ENCODE measurements at regions of chr6 and their contacts with region 1.

Region 1: GRCh38 chr6:142857233-142857761 is 87.7 kb downstream of the HIVEP2 start:
- DNase-seq: no peak
- ATAC-seq: peak; percentile 13
- H3K4me3 Mint-ChIP-seq: peak overlapping the region; percentile 82
- H3K27ac Mint-ChIP-seq: peak overlapping the region; percentile 95
- H3K4me1 Mint-ChIP-seq: peaks cover 67% of the 10 kb centered on the region
- H3K27me3 Mint-ChIP-seq: no peaks in the 10 kb centered on the region

Region 2: GRCh38 chr6:142819603-142820337 is 37.5 kb before region 1 on chr6:
- POLR2A ChIA-PET with region 1: interaction called, 12 read pairs
- DNase-seq: no peak
- ATAC-seq: peak; percentile 73
- H3K4me3 Mint-ChIP-seq: peak overlapping the region; percentile 93
- H3K27ac Mint-ChIP-seq: peak overlapping the region; percentile 96
- H3K4me1 Mint-ChIP-seq: peaks cover 51% of the 10 kb centered on the region
- H3K27me3 Mint-ChIP-seq: no peaks in the 10 kb centered on the region

Region 3: DNA sequence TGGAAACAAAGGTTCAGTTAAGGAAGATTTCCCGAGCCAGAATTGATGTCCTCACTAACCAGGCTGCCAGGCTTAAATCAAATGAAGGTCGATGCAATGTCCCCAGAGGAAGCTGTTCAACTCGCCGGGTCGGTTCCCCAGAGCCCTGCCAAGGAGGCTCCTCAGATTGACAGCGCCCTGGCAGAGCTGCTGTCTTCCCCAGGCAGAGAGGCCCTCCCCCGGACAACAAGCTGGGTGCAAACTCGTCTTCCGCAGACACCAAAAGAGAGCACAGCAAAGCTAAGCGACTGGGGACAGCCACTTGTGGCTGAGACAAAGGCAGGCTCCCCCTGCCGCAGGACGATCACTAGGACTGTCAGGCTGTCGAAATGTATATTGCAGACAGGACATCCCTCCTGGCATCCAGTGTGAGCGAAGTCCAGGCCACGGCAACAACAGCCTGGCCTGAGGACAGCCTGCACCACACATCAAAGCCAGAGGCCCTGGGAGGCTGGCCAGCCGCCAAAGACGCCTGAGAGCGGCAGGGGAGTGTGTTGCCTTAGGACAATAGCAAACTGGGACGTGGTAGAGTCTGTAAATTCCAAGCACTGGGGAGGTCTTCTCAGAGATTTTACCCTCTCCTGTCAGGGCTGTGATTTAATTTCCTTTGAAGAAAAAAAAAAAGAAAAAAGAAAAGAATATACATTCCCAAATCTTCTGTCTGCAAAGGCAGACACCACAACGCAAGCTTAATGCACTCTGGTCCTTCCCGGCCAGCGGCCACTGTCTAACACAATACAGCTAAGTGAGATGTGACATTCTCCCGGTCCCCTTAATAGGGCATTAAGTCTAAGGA is 11.5 kb before region 1 on chr6:
- POLR2A ChIA-PET with region 1: interaction called, 49 read pairs
- DNase-seq: peak; percentile 64
- ATAC-seq: peak; percentile 65
- H3K4me3 Mint-ChIP-seq: peak overlapping the region; percentile 80
- H3K27ac Mint-ChIP-seq: peak overlapping the region; percentile 87
- H3K4me1 Mint-ChIP-seq: peaks cover 75% of the 10 kb centered on the region
- H3K27me3 Mint-ChIP-seq: no peaks in the 10 kb centered on the region

Region 4: GRCh38 chr6:142913511-142914047 is 56.3 kb after region 1 on chr6:
- POLR2A ChIA-PET with region 1: no interaction called
- DNase-seq: peak; percentile 69
- ATAC-seq: peak; percentile 94
- H3K4me3 Mint-ChIP-seq: peak overlapping the region; percentile 76
- H3K27ac Mint-ChIP-seq: peak overlapping the region; percentile 93
- H3K4me1 Mint-ChIP-seq: peaks cover 63% of the 10 kb centered on the region
- H3K27me3 Mint-ChIP-seq: no peaks in the 10 kb centered on the region

Region 5: GRCh38 chr6:143034689-143035334 is 177.5 kb after region 1 on chr6:
- POLR2A ChIA-PET with region 1: no interaction called
- DNase-seq: no peak
- ATAC-seq: no peak
- H3K4me3 Mint-ChIP-seq: no peak overlapping the region
- H3K27ac Mint-ChIP-seq: no peak overlapping the region
- H3K4me1 Mint-ChIP-seq: peaks cover 7% of the 10 kb centered on the region
- H3K27me3 Mint-ChIP-seq: peaks cover 4% of the 10 kb centered on the region